Left lung (tissue), 14 donors: ENCODE measurements at regions of chr15 and their contacts with region 1.

Region 1: GRCh38 chr15:97909291-97909891 is 51.1 kb upstream of the ARRDC4 start:
- DNase-seq: peak; percentile 42 to 66 (median 58)
- ATAC-seq: peak; percentile 99
- H3K4me3 ChIP-seq: no peak overlapping the region
- H3K27ac ChIP-seq: no peak overlapping the region
- H3K4me1 ChIP-seq: no peaks in the 10 kb centered on the region
- H3K27me3 ChIP-seq: peaks cover 12 to 38% of the 10 kb centered on the region in 2 donors
- CTCF ChIP-seq: peak; percentile 80 to 86

Region 2: DNA sequence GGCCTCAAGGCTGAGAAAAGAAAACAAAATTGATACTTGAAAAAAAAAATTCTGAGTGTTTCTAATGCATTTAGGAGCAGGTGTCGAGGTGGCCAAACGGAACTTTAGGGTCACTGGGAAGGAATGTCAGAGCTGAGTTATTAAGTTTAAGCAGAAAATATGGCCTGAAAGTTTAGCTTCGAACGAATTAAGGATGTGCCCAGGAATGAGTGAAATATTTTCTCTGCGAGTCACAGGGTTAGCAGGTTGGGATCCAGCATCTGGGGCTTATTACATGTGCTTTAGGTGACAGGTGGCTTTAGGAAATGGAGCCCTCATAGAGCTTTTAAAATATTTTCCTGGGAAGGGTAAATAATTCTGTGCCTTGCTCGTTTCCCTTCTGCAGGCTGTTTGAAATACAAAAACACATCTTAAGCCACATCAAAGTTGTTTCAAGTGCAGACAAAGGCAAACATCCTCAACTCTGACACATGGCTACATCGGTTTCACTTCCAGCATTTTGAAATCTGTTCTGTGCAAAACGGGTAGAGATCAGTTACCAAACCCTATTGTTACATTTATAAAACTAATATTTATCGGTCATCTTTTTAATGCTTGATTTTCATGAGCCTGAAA is 92.0 kb before region 1 on chr15:
- intact Hi-C with region 1: no loop called
- DNase-seq: no peak
- ATAC-seq: no peak
- H3K4me3 ChIP-seq: no peak overlapping the region
- H3K27ac ChIP-seq: no peak overlapping the region
- H3K4me1 ChIP-seq: no peaks in the 10 kb centered on the region
- H3K27me3 ChIP-seq: no peaks in the 10 kb centered on the region
- CTCF ChIP-seq: no peak

Region 3: DNA sequence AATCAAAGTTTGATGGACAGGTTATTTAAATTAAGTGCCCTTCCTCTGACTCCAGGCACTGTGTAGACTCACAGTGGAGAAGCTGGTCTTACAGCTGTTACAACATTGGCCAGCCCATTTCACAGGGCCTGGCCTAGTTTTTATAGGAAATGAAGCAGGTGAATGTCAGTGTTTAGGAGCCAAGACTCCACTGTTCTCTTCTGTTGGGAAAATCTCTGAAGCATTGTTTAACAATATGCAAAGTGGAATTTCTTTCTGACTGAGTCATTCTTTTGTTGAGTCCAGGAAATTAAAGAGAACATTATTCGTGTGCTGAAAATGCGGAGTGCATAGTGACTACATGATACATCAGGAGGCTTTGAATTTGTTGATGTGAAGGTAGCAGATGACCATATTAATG is 115.8 kb after region 1 on chr15:
- intact Hi-C with region 1: no loop called
- DNase-seq: no peak
- ATAC-seq: peak; percentile 60
- H3K4me3 ChIP-seq: no peak overlapping the region
- H3K27ac ChIP-seq: no peak overlapping the region
- H3K4me1 ChIP-seq: no peaks in the 10 kb centered on the region
- H3K27me3 ChIP-seq: no peaks in the 10 kb centered on the region
- CTCF ChIP-seq: no peak

Region 4: DNA sequence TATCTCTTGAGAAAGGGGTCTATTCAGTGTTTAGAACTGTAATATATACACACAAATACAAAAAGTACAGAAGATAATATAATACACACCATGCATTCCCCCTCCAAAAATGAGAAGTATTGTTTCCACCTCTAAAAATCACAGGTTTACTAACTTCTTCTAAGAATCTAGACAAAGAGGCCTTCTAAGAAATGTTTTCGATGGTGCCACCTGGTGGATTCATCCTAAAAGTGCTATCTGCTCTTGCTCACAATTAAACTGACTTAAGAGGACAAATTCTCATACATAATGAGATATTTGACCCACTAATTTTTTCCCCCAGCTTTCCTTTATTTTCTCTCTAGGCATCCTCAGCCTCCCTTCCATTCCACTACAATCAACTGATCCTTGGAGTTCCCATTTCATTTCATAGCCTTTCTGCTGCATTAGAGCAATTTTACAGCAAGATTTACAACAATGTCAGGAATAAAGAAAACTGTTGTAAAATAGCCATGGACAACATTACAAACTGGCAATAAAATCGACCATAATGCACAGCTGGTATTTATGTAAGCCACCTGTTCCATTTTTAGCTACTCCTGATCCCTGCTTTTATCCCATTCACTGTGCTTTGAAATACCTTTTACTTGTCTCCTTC is 175.7 kb after region 1 on chr15:
- intact Hi-C with region 1: loop called (anchors 5 to 10 kb)
- DNase-seq: peak in 2 of 4 donors; percentile 22 to 54
- ATAC-seq: peak; percentile 45
- H3K4me3 ChIP-seq: no peak overlapping the region
- H3K27ac ChIP-seq: no peak overlapping the region
- H3K4me1 ChIP-seq: no peaks in the 10 kb centered on the region
- H3K27me3 ChIP-seq: no peaks in the 10 kb centered on the region
- CTCF ChIP-seq: peak; percentile 45 to 65

Region 5: DNA sequence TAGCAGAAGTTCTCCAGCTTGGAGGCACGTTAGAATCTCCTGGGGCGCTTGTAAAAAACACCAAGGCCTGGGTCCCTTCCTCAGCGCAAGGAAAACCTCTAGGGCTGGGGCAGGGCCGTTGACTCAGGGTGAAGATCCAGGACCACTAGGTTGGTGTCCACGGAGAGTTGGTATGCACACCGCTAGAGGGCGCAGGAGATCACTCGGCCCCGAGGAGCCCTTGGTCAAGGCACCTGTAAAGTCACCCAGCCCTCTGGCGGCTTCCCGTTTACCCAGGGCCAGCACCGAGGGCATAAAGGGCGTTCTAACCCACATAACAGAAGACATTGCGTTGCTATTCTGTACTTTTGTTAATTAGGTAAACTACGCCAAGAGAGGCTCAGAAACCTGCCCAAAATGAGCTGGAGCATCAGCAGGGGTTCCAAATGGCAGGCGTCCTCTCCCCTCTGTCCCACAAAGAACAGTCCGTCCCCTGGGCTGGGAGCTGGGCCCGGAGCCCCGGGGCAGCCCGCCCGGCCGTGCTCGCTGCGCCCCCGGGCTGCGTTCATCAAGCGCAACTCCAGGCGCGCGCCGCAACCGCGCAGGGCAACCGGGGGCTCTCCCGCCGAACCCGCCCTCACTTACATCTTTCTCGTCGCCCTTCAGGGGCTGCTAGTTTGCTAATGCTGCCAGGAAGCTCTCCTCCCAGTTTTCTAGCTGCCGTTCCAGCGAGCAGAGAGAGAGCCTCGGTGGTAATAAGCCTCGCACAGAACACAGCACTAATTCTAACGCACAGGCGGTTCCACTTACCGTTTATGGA is 383.2 kb after region 1 on chr15:
- intact Hi-C with region 1: loop called in 1 of 2 experiments (anchors 10 kb)
- DNase-seq: peak in 3 of 4 donors; percentile 11 to 79 (median 44)
- ATAC-seq: peak; percentile 85
- H3K4me3 ChIP-seq: no peak overlapping the region
- H3K27ac ChIP-seq: no peak overlapping the region
- H3K4me1 ChIP-seq: no peaks in the 10 kb centered on the region
- H3K27me3 ChIP-seq: peaks cover 11 to 66% of the 10 kb centered on the region in 2 donors
- CTCF ChIP-seq: peak; percentile 44 to 52